GM12878 (cell line): ENCODE measurements at regions of chr10 and their contacts with region 1.

Region 1: DNA sequence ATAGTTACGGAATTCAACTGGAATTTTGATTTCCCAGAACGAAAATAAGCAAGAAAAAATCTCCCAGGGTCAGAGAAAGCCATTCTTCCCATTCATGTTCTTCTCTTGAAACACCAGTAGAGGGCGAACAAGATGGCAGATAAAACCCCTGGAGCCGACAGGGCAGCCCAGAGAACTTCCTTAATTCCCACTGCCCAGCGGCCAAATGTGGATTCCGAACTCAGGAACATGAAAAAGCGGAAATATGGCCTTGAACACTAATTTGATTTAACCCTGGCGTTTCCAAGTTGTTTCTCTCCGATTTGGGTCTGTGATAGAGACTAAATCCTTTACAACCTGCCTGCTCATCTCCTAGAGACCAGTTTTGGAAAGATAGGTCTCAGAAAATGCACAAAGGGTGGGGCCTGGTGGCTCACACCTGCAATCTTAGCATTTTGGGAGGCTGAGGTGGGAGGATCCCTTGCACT is 100.7 kb upstream of the WAC start:
- DNase-seq: no peak
- ATAC-seq: peak; percentile 80
- H3K4me3 ChIP-seq: no peak overlapping the region
- H3K27ac ChIP-seq: no peak overlapping the region
- H3K4me1 ChIP-seq: no peaks in the 10 kb centered on the region
- H3K27me3 ChIP-seq: no peaks in the 10 kb centered on the region
- CTCF ChIP-seq: peak; percentile 69 to 77 (median 70)
- EP300 ChIP-seq: no peak
- POLR2A ChIP-seq: no peak
- RAD21 ChIP-seq: peak; percentile 68

Region 2: GRCh38 chr10:28532383-28533175 is 100.3 kb after region 1 on chr10 and contains the start of gene WAC:
- CTCF ChIA-PET with region 1: interaction called, 5 read pairs
- POLR2A ChIA-PET with region 1: no interaction called
- RAD21 ChIA-PET with region 1: no interaction called
- SMC1A ChIA-PET with region 1: no interaction called
- in situ Hi-C with region 1: no loop called
- intact Hi-C with region 1: loop called (anchors 10 kb)
- DNase-seq: peak; percentile 72
- ATAC-seq: peak; percentile 88
- H3K4me3 ChIP-seq: peak within 1 kb of the TSS; percentile 92
- H3K27ac ChIP-seq: peak within 1 kb of the TSS; percentile 100
- H3K4me1 ChIP-seq: peaks cover 4% of the 10 kb centered on the region
- H3K27me3 ChIP-seq: no peaks in the 10 kb centered on the region
- CTCF ChIP-seq: no peak
- EP300 ChIP-seq: 0 out of 4 replicates have a peak, but pooled peaks of 1 of the 2 experiments have one; percentile 16
- POLR2A ChIP-seq: peak; percentile 98
- RAD21 ChIP-seq: no peak
- polyA plus RNA-seq, gene WAC: 26.5 to 30.4 TPM

Region 3: DNA sequence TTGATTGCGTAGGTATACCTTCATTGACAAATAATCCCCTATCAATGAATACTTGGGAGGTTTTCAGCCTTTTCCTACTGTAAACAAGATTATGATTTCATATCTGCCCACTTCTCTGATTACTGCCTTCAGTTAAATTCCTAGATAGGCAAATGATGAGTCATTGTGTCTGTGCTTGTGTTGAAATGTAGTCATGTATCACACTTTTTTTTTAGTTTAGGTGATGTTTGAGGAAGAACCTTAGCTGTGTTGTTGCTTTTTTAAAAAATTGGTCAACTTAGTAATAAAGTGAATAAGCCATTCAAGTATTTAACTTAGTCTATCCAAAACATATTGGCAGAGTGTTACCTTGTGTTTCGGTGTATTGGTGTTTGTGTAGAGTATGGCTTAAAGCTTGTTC is 160.7 kb after region 1 on chr10:
- CTCF ChIA-PET with region 1: no interaction called
- POLR2A ChIA-PET with region 1: no interaction called
- RAD21 ChIA-PET with region 1: no interaction called
- SMC1A ChIA-PET with region 1: interaction called, 3 read pairs
- in situ Hi-C with region 1: no loop called
- intact Hi-C with region 1: loop called (anchors 10 kb)
- DNase-seq: no peak
- ATAC-seq: no peak
- H3K4me3 ChIP-seq: no peak overlapping the region
- H3K27ac ChIP-seq: no peak overlapping the region
- H3K4me1 ChIP-seq: no peaks in the 10 kb centered on the region
- H3K27me3 ChIP-seq: no peaks in the 10 kb centered on the region
- CTCF ChIP-seq: no peak
- EP300 ChIP-seq: no peak
- POLR2A ChIP-seq: no peak
- RAD21 ChIP-seq: no peak

Region 4: GRCh38 chr10:28628184-28628893 is 196.1 kb after region 1 on chr10:
- CTCF ChIA-PET with region 1: no interaction called
- POLR2A ChIA-PET with region 1: no interaction called
- RAD21 ChIA-PET with region 1: interaction called, 3 read pairs
- SMC1A ChIA-PET with region 1: no interaction called
- in situ Hi-C with region 1: no loop called
- intact Hi-C with region 1: loop called (anchors 10 kb)
- DNase-seq: no peak
- ATAC-seq: peak; percentile 96
- H3K4me3 ChIP-seq: no peak overlapping the region
- H3K27ac ChIP-seq: no peak overlapping the region
- H3K4me1 ChIP-seq: no peaks in the 10 kb centered on the region
- H3K27me3 ChIP-seq: no peaks in the 10 kb centered on the region
- CTCF ChIP-seq: peak; percentile 82 to 96 (median 89)
- EP300 ChIP-seq: no peak
- POLR2A ChIP-seq: no peak
- RAD21 ChIP-seq: peak; percentile 62